Activated CD4-positive, alpha-beta memory T cell treated with anti-CD3 and anti-CD28 coated beads for 36 hours (primary cell): ENCODE measurements at regions of chr5 and their contacts with region 1.

Region 1: GRCh38 chr5:105898183-105898582 is 1772.6 kb downstream of the EFNA5 start:
- DNase-seq: no peak
- H3K4me3 Mint-ChIP-seq: no peak overlapping the region
- H3K27ac Mint-ChIP-seq: no peak overlapping the region
- H3K4me1 Mint-ChIP-seq: no peaks in the 10 kb centered on the region
- H3K27me3 Mint-ChIP-seq: no peaks in the 10 kb centered on the region

Region 2: DNA sequence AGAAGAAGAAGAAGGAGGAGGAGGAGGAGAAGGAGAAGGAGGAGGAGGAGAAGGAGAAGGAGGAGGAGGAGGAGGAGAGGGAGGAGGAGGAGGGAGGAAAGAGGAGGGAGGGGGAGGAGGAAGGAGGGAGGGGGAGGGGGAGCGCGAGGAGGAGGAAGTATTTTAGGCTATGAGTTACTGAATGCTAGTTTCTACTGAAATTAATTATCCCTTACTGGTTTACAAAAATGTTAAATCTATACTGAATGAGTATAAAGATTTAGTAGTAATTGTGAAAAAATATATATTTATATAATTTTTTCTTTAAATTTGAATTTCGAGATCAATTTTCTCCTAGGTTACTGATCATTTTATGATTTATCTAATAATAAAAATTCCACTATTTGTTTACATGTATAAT is 566.6 kb before region 1 on chr5:
- CTCF ChIA-PET with region 1: no interaction called
- POLR2A ChIA-PET with region 1: no interaction called
- intact Hi-C with region 1: no loop called
- DNase-seq: no peak
- H3K4me3 Mint-ChIP-seq: no peak overlapping the region
- H3K27ac Mint-ChIP-seq: no peak overlapping the region
- H3K4me1 Mint-ChIP-seq: no peaks in the 10 kb centered on the region
- H3K27me3 Mint-ChIP-seq: no peaks in the 10 kb centered on the region

Region 3: DNA sequence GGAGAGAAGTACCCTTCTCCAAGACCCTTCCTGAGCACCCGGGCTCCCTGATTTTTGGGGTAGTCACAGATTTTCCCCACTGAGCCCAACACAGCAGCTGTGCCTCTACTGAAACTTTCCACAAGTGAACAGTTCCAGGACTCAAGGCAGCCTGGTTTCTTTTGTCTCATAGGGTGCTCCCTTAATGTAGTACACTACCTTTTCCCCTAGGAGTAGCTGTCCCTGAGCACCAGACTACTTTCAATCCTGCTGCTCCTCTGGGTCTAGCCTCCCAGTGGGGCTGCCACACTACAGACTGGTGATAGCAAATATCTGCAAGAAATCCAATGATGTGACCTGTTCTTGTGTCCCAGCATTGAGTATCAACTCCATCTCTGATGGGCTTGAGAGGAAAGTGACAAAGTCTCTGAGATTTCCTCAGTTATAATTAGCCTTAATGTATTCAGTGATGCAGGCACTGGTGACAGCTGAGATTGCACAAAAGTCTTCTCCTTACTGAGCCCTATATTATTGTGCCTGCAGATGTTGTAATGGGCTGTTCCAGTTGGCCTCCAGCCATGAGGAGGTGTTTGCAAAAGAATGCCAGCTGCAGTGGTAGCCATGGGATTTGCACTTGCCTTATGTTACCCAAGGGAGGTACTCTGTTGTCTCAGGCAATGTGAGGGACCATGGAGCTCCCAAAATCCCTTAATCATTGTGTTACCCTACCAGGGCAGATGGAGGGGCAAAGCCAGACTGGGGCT is 30.0 kb before region 1 on chr5:
- CTCF ChIA-PET with region 1: no interaction called
- POLR2A ChIA-PET with region 1: no interaction called
- intact Hi-C with region 1: no loop called
- DNase-seq: no peak
- H3K4me3 Mint-ChIP-seq: no peak overlapping the region
- H3K27ac Mint-ChIP-seq: no peak overlapping the region
- H3K4me1 Mint-ChIP-seq: no peaks in the 10 kb centered on the region
- H3K27me3 Mint-ChIP-seq: no peaks in the 10 kb centered on the region

Region 4: DNA sequence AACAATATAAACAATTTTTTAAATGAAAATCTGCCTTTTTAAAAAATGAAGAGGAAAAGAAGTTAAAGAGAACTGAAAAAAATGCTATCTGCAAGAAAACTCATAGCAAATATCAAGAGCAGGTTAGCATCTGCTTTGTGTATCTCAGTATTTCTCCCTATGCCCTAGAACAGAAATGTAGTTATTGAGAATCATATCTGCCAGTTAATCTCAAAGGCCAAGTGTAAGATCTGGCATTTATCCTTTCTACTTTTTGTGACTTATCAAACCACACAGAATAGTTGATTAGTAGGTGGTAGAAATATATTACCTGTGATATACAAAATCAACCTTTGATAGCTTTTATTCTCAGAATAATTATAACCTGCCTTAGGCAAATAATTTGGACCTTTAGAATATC is 72.7 kb after region 1 on chr5:
- CTCF ChIA-PET with region 1: no interaction called
- POLR2A ChIA-PET with region 1: no interaction called
- intact Hi-C with region 1: loop called (anchors 2 kb)
- DNase-seq: no peak
- H3K4me3 Mint-ChIP-seq: no peak overlapping the region
- H3K27ac Mint-ChIP-seq: no peak overlapping the region
- H3K4me1 Mint-ChIP-seq: no peaks in the 10 kb centered on the region
- H3K27me3 Mint-ChIP-seq: no peaks in the 10 kb centered on the region